Posterior cingulate gyrus (tissue), 11 donors: ENCODE measurements at regions of chr1 and their contacts with region 1.

Region 1: GRCh38 chr1:178310685-178311105 is 186.1 kb downstream of the CLEC20A start:
- DNase-seq: no peak

Region 2: DNA sequence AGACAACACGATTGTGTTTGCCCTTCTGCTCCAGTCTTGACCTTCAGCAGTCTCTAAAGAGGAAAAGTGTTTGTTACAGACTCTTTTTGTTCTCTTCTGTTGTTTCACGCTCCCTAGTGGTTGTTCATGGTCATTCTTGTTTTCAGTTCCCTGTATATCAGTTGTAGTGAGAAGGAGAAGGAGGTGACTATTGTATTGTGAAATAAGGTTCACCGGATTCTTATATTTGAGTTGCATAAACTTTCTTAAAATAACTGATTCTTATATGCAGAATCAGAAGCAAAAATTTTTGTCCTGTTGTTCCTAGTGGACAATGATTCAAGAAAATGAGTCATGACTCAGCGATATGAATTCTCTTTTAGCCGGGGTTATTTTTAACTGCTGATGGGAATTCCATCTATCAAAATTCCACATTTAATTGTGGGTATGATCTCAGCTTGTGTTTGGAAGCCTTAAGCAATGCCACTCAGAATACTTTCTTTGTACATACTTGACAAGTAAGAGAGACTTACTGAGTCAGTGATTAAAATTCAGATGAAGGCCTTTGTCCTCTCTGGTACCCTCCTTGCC is 33.9 kb after region 1 on chr1:
- intact Hi-C with region 1: loop called (anchors 2 kb)
- DNase-seq: no peak

Region 3: GRCh38 chr1:178407655-178408054 is 97.0 kb after region 1 on chr1:
- intact Hi-C with region 1: no loop called
- DNase-seq: no peak

Region 4: DNA sequence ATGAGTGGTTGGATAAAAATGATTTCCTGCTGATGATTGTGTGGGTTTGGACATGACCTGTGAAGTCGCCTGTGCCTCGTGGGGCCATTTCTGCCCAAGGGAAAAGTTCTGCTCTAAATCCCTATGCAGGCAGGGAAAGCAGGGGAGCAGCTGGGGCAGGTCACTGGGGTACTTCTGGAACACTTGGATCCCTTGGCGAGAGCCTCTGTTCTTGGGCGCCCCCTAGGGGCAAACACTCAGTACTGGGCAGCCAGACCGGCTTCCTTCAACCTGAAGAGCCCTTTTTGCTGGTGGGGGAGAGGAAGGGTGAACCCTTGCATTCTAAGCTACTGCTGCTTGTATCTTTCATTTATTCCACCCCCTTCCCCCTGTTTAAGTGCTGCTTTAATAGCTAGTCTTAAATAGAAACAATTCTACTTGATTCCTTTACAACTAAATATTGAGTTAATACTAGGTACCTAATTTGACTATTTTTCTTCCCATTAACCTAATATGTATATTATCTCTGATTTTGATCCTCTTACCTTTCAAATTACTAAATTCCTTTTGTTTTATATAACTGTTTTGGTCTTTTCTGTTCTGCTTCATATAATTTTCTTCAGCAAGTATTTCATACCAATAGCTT is 191.1 kb after region 1 on chr1:
- intact Hi-C with region 1: loop called (anchors 2 kb)
- DNase-seq: peak in 8 of 10 donors; percentile 57 to 96 (median 72)

Region 5: GRCh38 chr1:178749581-178750166 is 439.0 kb after region 1 on chr1:
- intact Hi-C with region 1: loop called (anchors 10 kb)
- DNase-seq: no peak